ENCODE measurements at regions of chr4 and their contacts with region 1.

Region 1: GRCh38 chr4:13654158-13654797 is 26.8 kb upstream of the BOD1L1 start:
- DNase-seq: peak; percentile 64
- H3K4me3 ChIP-seq: peak overlapping the region in 2 of 3 experiments; percentile 23 to 26
- H3K27ac ChIP-seq: no peak overlapping the region
- H3K4me1 ChIP-seq: peaks cover 4% of the 10 kb centered on the region
- H3K27me3 ChIP-seq: peaks cover 4 to 5% of the 10 kb centered on the region in 2 experiments
- CTCF ChIP-seq: peak; percentile 69 to 90
- POLR2A ChIP-seq: no peak

Region 2: GRCh38 chr4:13081830-13082229 is 572.4 kb before region 1 on chr4:
- CTCF ChIA-PET with region 1: no interaction called
- POLR2A ChIA-PET with region 1: no interaction called
- dilution Hi-C with region 1: no loop called
- intact Hi-C with region 1: no loop called
- DNase-seq: no peak
- H3K4me3 ChIP-seq: no peak overlapping the region
- H3K27ac ChIP-seq: no peak overlapping the region
- H3K4me1 ChIP-seq: no peaks in the 10 kb centered on the region
- H3K27me3 ChIP-seq: no peaks in the 10 kb centered on the region
- CTCF ChIP-seq: no peak
- POLR2A ChIP-seq: no peak

Region 3: DNA sequence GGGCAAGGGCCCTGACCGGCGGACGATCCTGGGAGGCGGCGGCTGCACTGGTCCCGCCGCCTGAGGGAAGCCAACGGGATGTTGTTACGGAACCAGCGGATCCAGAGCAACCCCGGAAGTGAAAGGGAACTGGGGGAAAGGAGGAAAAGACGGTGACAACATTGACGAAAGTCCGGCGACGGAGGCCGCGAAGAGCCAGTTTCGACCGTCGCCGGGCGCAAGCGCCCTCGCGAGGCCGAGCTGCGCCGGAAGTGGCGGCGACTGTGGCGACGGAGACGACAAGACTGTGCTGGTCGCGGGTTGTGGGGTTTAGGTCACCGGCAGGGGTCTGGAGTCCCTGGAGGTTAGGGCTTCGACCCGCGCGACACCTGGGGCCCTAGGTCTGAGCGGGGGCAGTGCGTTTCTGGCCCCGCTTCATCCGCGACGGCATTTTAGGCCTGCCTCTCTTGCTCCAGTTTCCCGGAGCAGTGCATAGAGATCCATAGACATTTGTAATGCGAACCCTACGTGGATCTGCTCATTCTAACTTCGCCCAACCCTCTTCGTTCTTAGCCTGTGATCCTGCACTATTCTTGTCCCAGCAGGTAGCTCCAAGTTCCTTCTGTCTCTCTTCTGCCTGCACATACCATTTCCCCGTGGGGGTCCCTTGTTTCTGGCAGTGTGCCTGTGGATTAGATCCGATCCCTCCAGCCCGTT is 26.5 kb before region 1 on chr4 and contains the start of gene BOD1L1:
- CTCF ChIA-PET with region 1: interaction called, 16 read pairs
- POLR2A ChIA-PET with region 1: interaction called, 4 read pairs
- dilution Hi-C with region 1: no loop called
- intact Hi-C with region 1: loop called (anchors 2 kb)
- DNase-seq: peak; percentile 91
- H3K4me3 ChIP-seq: peak within 1 kb of the TSS; percentile 71 to 91 (median 81)
- H3K27ac ChIP-seq: peak within 1 kb of the TSS; percentile 90
- H3K4me1 ChIP-seq: peaks cover 16% of the 10 kb centered on the region
- H3K27me3 ChIP-seq: no peaks in the 10 kb centered on the region
- CTCF ChIP-seq: peak; percentile 42 to 76
- POLR2A ChIP-seq: peak; percentile 98
- total RNA-seq, gene BOD1L1: 27.5 and 31.2 TPM in 2 replicates

Region 4: DNA sequence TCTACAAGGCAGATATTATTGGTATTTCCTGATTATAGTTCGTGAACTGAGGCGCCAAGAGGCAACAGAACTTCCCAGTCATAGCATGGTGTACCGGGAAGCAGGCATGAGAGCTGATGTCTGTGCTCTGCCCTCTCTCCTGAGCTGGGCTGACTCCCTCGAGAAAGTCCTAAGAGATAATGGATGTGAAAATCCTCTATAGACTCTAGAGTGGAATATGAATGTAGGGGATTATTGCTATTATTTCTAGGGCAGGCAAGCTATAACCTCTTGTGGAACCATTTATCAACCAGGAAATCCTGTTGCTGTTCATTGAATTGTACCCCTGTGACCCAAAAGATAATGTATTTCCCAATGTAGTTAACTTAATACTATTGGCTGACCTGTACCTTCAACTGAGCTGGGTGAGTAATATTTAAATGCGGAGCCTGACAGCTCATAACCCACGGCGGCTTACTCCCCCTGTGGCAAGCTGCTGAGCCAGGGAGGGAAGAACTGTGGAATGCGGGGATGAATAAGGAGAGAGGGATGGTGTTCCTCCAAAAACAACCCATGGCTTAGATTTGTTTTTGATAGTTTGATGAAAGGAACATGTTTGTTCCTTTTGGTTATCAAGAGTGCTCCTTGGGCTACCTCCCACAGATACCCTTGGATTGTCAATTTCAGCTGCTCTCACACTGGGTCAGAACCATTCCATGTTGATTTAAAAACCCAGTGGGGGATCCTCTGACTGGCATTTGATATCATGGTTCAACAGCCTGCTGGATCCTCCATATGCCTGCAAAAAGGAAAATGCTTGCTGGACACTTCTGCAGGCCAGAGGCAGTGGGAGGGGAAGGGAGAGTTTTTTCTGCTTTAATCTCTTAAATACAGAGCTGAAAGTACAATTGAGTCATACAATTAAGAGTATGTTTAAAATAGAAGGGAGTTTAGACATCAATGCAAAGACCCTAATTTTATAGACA is 312.2 kb after region 1 on chr4:
- CTCF ChIA-PET with region 1: interaction called, 3 read pairs
- POLR2A ChIA-PET with region 1: no interaction called
- dilution Hi-C with region 1: no loop called
- intact Hi-C with region 1: loop called (anchors 2 kb)
- DNase-seq: peak; percentile 69
- H3K4me3 ChIP-seq: no peak overlapping the region
- H3K27ac ChIP-seq: no peak overlapping the region
- H3K4me1 ChIP-seq: peaks cover 9% of the 10 kb centered on the region
- H3K27me3 ChIP-seq: peaks cover 13 to 20% of the 10 kb centered on the region in 2 experiments
- CTCF ChIP-seq: no peak
- POLR2A ChIP-seq: no peak

Region 5: GRCh38 chr4:14254252-14254651 is 600.0 kb after region 1 on chr4:
- CTCF ChIA-PET with region 1: interaction called, 21 read pairs
- POLR2A ChIA-PET with region 1: no interaction called
- dilution Hi-C with region 1: no loop called
- intact Hi-C with region 1: loop called (anchors 1 kb)
- DNase-seq: peak; percentile 44
- H3K4me3 ChIP-seq: no peak overlapping the region
- H3K27ac ChIP-seq: no peak overlapping the region
- H3K4me1 ChIP-seq: no peaks in the 10 kb centered on the region
- H3K27me3 ChIP-seq: no peaks in the 10 kb centered on the region
- CTCF ChIP-seq: peak; percentile 43 to 59
- POLR2A ChIP-seq: no peak

Region 6: DNA sequence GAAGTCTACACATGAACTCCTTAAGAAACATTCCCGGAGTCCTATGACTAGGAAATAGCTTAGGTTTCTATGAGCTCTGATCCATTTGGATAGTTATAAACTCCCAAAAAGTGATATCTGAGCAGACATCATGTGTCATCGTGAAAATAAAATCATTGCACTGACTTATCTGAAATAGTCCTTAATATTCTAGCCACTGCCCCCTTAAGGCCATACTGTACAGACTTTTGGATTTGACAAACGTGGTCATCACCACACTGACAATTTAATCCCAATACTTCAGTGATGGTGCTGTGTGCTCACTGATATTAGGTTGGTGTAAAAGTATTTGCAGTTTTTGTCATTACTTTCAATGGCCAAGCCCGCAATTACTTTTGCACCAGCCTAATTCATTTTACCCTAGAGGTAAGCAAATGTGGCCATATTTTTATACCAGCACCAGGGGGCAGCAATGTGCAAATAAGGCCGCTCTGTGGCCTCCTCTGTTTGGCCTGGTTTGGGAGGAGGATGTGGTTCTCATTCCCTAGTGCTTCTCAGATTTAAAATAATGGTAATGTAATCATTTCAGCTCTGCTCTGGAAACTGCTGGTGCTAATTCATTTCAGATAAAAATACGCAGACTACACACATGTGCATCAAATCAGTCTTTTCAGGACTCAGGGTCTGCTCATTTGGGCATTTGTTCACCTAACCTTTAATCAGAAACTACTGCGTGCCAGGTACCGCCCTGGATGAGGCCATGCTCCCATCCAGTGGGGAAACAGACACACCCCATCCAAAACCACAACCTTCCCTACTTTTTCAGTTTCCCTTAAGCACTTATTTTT is 1577.2 kb after region 1 on chr4:
- CTCF ChIA-PET with region 1: interaction called, 3 read pairs
- POLR2A ChIA-PET with region 1: no interaction called
- dilution Hi-C with region 1: no loop called
- intact Hi-C with region 1: loop called (anchors 1 kb)
- DNase-seq: peak; percentile 62
- H3K4me3 ChIP-seq: no peak overlapping the region
- H3K27ac ChIP-seq: no peak overlapping the region
- H3K4me1 ChIP-seq: no peaks in the 10 kb centered on the region
- H3K27me3 ChIP-seq: no peaks in the 10 kb centered on the region
- CTCF ChIP-seq: peak; percentile 60 to 61
- POLR2A ChIP-seq: no peak

Region 7: GRCh38 chr4:15457406-15458201 is 1803.3 kb after region 1 on chr4:
- CTCF ChIA-PET with region 1: interaction called, 17 read pairs
- POLR2A ChIA-PET with region 1: no interaction called
- dilution Hi-C with region 1: no loop called
- intact Hi-C with region 1: loop called (anchors 2 kb)
- DNase-seq: peak; percentile 49
- H3K4me3 ChIP-seq: no peak overlapping the region
- H3K27ac ChIP-seq: no peak overlapping the region
- H3K4me1 ChIP-seq: no peaks in the 10 kb centered on the region
- H3K27me3 ChIP-seq: peaks cover 3 to 18% of the 10 kb centered on the region in 2 experiments
- CTCF ChIP-seq: peak; percentile 50 to 54
- POLR2A ChIP-seq: no peak